ENCODE measurements at regions of chr6 and their contacts with region 1.

Region 1: GRCh38 chr6:73129653-73130443 is 95.4 kb downstream of the KHDC1L start:
- H3K4me3 Mint-ChIP-seq: no peak overlapping the region
- H3K27ac Mint-ChIP-seq: no peak overlapping the region
- H3K4me1 Mint-ChIP-seq: no peaks in the 10 kb centered on the region
- H3K27me3 Mint-ChIP-seq: peaks cover 1% of the 10 kb centered on the region

Region 2: GRCh38 chr6:73180763-73181619 is 51.1 kb after region 1 on chr6:
- intact Hi-C with region 1: loop called (anchors 2 kb)
- H3K4me3 Mint-ChIP-seq: no peak overlapping the region
- H3K27ac Mint-ChIP-seq: no peak overlapping the region
- H3K4me1 Mint-ChIP-seq: no peaks in the 10 kb centered on the region
- H3K27me3 Mint-ChIP-seq: no peaks in the 10 kb centered on the region

Measured in dendritic cell treated with granulocyte-macrophage colony-stimulating factor and Interleukin-4, amounts not matched to agents 40 ng/mL and 50 ng/mL, for 4 days (primary cell).